Ascending aorta (tissue), 2 donors: ENCODE measurements at regions of chr15 and their contacts with region 1.

Region 1: GRCh38 chr15:63157118-63157843 is at the start of gene RPS27L:
- DNase-seq: peak; percentile 61 to 95
- H3K4me3 ChIP-seq: peak within 1 kb of the TSS; percentile 67 to 82
- H3K27ac ChIP-seq: peak within 1 kb of the TSS; percentile 92 to 96
- H3K4me1 ChIP-seq: peaks cover 0 to 12% of the 10 kb centered on the region in 2 donors
- H3K27me3 ChIP-seq: no peaks in the 10 kb centered on the region
- CTCF ChIP-seq: peak in 1 of 3 experiments; percentile 10
- total RNA-seq, gene RPS27L: 16.9 TPM

Region 2: GRCh38 chr15:63122002-63122893 is 35.0 kb before region 1 on chr15:
- intact Hi-C with region 1: loop called (anchors 1 kb)
- DNase-seq: peak; percentile 88 to 95
- H3K4me3 ChIP-seq: peak overlapping the region; percentile 73 to 77
- H3K27ac ChIP-seq: peak overlapping the region; percentile 76 to 89
- H3K4me1 ChIP-seq: peaks cover 0 to 4% of the 10 kb centered on the region in 2 donors
- H3K27me3 ChIP-seq: no peaks in the 10 kb centered on the region
- CTCF ChIP-seq: peak in 2 of 3 experiments; percentile 6 to 31

Region 3: DNA sequence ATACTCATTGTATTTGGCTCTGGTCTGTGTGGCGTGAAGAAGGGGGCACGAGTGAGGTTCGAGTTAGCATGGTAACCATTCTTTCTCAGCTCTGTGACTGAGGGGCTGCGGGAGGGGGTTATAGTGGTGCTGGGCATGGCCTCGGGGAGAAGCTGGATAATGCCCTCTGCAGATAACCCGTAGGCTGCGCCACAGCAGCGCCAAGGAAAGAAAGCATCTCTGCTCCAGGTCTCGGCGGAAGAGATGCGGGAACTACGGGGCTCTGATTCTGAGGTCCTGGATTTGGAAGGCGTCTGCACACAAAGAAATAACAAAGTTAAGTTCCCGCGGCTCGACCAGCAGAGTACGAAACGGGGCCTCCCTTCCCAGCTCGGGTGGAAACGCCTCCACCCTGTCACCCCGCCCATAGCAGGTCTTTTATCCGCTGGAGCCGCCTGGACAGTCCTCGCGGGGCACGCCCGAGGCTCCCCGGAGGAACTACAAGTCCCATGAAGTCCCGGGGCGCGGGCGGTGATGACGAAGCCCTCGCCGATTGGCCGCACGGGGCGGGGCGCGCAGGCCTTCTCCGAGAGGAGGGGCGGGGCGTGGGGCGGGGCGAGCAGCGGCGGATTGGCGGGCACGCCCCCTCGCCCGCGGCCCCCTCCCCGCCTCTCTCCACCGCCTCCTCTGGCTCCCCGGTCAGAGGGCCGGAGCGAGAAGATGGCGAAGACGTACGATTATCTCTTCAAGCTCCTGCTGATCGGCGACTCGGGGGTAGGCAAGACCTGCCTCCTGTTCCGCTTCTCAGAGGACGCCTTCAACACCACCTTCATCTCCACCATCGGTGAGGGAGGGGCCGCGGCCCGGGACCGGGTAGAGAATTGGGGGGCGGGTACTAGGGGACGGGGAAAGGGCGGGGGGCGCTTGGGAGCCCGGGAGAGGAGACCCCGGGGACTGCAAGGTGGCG is 31.9 kb after region 1 on chr15 and contains the start of gene RAB8B:
- intact Hi-C with region 1: loop called (anchors 1 kb)
- DNase-seq: peak; percentile 94 to 99
- H3K4me3 ChIP-seq: peak within 1 kb of the TSS; percentile 85 to 96
- H3K27ac ChIP-seq: peak within 1 kb of the TSS; percentile 84 to 90
- H3K4me1 ChIP-seq: peaks cover 0 to 13% of the 10 kb centered on the region in 2 donors
- H3K27me3 ChIP-seq: no peaks in the 10 kb centered on the region
- CTCF ChIP-seq: peak in 1 of 3 experiments; percentile 8
- total RNA-seq, gene RAB8B: 25.1 TPM

Region 4: DNA sequence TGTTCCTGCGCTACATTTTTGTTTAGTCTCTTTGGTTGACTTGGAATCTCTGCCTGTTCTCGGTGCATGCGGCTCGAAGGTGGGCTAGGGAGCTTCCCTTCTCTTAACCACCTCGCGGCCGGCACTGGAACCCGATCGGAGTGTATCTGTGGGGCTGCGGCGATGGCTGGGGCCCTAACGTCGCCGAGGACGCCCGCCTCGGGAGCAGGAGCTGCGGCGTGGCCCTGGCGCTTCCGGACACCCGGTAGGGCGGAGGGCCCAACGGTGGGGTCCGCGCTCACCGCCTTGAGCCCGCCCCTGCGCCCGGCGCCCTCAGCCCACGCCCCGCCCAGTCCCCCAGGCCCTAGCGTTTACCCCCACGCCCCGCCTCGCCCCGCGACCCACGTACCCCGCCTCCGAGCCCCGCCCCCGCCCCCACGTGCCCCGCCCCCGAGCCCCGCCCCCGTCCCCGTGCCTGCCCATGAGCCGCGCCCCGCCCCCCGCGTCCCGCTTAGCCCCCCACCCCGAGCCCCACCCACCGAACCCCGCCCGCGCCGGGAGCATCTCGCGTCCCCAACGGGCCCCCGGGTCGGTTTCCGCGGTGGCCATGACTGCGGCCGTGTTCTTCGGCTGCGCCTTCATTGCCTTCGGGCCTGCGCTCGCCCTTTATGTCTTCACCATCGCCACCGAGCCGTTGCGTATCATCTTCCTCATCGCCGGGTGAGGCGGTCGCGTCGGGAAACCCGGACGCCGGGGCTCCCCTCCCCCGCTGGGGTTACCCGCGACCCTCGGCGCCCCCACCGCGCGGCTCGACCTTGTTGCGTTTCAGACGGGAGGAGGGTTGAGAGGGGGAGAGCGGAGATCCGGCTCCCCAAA is 120.0 kb after region 1 on chr15 and contains the start of gene APH1B:
- intact Hi-C with region 1: loop called (anchors 2 kb)
- DNase-seq: peak in 1 of 2 donors; percentile 85
- H3K4me3 ChIP-seq: peak within 1 kb of the TSS; percentile 76 to 81
- H3K27ac ChIP-seq: peak within 1 kb of the TSS; percentile 84 to 87
- H3K4me1 ChIP-seq: peaks cover 0 to 4% of the 10 kb centered on the region in 2 donors
- H3K27me3 ChIP-seq: no peaks in the 10 kb centered on the region
- CTCF ChIP-seq: no peak
- total RNA-seq, gene APH1B: 17.0 TPM

Region 5: GRCh38 chr15:63402498-63403253 is 245.4 kb after region 1 on chr15:
- intact Hi-C with region 1: loop called (anchors 10 kb)
- DNase-seq: peak in 1 of 2 donors; percentile 38
- H3K4me3 ChIP-seq: peak overlapping the region in 1 of 2 donors; percentile 34
- H3K27ac ChIP-seq: no peak overlapping the region
- H3K4me1 ChIP-seq: no peaks in the 10 kb centered on the region
- H3K27me3 ChIP-seq: no peaks in the 10 kb centered on the region
- CTCF ChIP-seq: peak; percentile 59 to 76 (median 63)

Region 6: GRCh38 chr15:63466378-63467192 is 309.3 kb after region 1 on chr15:
- intact Hi-C with region 1: no loop called
- DNase-seq: peak in 1 of 2 donors; percentile 58
- H3K4me3 ChIP-seq: no peak overlapping the region
- H3K27ac ChIP-seq: no peak overlapping the region
- H3K4me1 ChIP-seq: peaks cover 0 to 5% of the 10 kb centered on the region in 2 donors
- H3K27me3 ChIP-seq: no peaks in the 10 kb centered on the region
- CTCF ChIP-seq: peak; percentile 45 to 65 (median 47)